Posterior cingulate gyrus (tissue), 11 donors: ENCODE measurements at regions of chr10 and their contacts with region 1.

Region 1: GRCh38 chr10:25080880-25081581 is 64.6 kb downstream of the THNSL1 start:
- DNase-seq: peak; percentile 66 to 97 (median 86)

Region 2: DNA sequence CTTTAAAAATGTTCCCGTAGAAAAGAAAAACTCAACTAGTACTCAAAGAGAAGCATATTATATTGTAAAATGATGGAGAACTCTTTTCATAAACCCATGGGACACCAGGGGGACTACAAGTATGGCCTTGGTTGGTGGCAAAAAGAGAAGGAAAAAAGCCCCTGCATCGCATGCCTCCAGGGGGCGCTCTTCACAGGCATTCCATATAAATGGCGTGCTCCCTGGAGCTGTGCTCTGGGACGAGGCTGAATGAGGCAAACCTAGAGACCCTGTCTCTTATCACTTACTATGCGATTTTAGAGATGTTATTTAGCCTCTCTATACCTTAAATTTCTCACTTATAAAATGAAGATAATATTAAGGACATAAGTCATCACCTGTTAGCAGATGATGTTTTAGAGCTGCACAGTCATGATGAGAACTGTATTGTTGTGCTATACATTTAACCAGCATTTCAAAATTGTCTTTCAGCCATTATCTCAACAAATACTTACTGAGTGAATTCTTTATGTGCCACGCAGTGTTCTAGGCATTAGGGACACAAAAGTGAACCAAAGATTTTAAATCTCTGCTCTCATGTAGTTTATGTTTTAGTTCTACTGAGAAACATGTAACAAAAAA is 463.1 kb before region 1 on chr10:
- intact Hi-C with region 1: loop called (anchors 10 kb)
- DNase-seq: peak in 7 of 10 donors; percentile 29 to 90 (median 56)

Region 3: GRCh38 chr10:25026463-25026862 is 54.6 kb before region 1 on chr10:
- intact Hi-C with region 1: loop called (anchors 2 kb)
- DNase-seq: no peak